Endothelial cell of umbilical vein (primary cell): ENCODE measurements at regions of chr9 and their contacts with region 1.

Region 1: DNA sequence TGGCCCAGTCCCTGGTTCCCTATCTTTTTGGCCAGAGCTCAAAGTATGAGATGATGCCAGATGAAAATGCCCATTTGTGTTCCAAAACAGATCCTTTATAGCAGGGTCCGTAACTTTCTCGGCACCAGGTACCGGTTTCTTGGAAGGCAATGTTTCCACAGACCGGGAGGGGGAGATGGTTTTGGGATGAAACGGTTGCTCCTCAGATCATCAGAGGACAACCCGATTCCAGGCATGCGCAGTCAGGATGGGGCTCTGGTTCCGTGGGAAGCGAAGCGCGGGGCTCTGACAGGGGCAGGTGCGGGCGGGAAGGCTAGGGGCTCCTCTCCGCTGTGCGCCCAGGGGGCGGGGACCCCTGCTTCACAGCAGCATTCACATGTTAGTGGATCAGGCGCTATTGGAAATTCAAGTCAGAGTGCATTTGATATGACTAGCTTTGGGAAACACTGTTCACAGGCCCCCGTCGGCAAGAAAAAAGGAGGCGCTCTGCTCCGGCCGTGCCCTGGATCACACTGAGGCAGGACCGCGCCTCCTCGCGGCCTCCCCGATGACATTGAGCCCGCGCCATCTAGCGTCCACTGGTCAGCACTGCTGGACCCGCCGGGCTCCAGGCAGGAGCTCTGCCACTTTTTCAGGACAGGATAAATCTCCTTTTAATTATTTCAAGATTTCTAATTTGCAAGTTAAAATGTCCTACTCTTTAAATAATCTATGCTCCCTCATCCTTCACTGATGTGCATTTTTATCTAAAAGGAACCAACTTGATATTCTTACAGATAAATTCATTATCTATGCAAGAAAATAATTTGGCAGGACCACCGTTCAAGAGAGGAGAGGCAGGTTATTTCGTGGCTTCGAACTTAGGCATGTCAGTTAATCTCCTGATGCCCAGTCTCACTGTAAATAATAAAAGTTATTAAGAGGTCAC is 190.0 kb downstream of the FANCC start:
- DNase-seq: peak; percentile 78
- H3K4me3 ChIP-seq: peak overlapping the region in 2 of 3 experiments; percentile 33 to 46
- H3K27ac ChIP-seq: no peak overlapping the region
- H3K4me1 ChIP-seq: no peaks in the 10 kb centered on the region
- H3K27me3 ChIP-seq: no peaks in the 10 kb centered on the region
- CTCF ChIP-seq: peak; percentile 97 to 99
- POLR2A ChIP-seq: no peak

Region 2: GRCh38 chr9:94672811-94673487 is 454.6 kb before region 1 on chr9:
- CTCF ChIA-PET with region 1: interaction called, 707 read pairs
- POLR2A ChIA-PET with region 1: interaction called, 3 read pairs
- dilution Hi-C with region 1: loop called (anchors 25 kb)
- intact Hi-C with region 1: loop called (anchors 1 kb)
- DNase-seq: no peak
- H3K4me3 ChIP-seq: no peak overlapping the region
- H3K27ac ChIP-seq: no peak overlapping the region
- H3K4me1 ChIP-seq: peaks cover 6% of the 10 kb centered on the region
- H3K27me3 ChIP-seq: no peaks in the 10 kb centered on the region
- CTCF ChIP-seq: no peak
- POLR2A ChIP-seq: no peak

Region 3: DNA sequence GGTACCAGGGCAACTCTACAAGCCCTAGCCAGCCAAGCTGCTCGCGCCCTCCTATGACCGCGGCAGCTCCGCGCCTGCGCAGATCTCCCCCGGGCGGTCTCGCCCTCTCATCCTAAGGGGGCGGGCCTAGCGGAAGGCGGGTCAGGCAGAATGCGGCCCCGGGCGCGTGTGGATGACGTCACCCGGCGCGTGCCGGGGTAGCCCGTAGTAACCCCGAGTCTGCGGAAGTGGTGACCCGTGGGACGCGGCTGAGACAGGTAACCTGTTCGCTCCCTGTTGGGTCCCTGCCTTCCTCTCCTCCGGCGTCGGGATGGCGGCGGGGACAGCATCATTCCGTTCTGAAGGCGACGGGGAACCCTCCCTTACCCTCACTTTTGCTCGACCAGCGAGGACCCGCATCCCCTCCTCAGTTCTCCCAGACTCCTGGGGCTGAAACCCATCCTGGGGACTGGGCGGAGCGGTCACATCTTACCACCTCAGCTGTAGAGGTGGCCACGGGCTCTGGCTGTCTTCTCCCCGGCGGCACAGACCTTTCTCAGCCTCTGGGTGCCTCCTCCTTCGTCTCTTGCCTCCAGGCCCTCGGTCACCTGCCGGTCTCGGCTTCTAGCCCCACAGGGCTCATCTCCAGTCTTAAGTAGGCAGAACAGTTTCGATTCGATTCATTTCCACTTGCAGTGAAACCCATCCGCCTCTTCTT is 400.9 kb before region 1 on chr9 and contains the start of gene AOPEP:
- CTCF ChIA-PET with region 1: interaction called, 12 read pairs
- POLR2A ChIA-PET with region 1: no interaction called
- dilution Hi-C with region 1: no loop called
- intact Hi-C with region 1: loop called (anchors 2 kb)
- DNase-seq: peak; percentile 94
- H3K4me3 ChIP-seq: peak within 1 kb of the TSS; percentile 62 to 93 (median 82)
- H3K27ac ChIP-seq: peak within 1 kb of the TSS; percentile 67
- H3K4me1 ChIP-seq: peaks cover 5% of the 10 kb centered on the region
- H3K27me3 ChIP-seq: no peaks in the 10 kb centered on the region
- CTCF ChIP-seq: no peak
- POLR2A ChIP-seq: peak; percentile 66
- total RNA-seq, gene AOPEP: 35.6 and 41.6 TPM in 2 replicates

Region 4: GRCh38 chr9:94783102-94783664 is 344.3 kb before region 1 on chr9:
- CTCF ChIA-PET with region 1: interaction called, 134 read pairs
- POLR2A ChIA-PET with region 1: no interaction called
- dilution Hi-C with region 1: no loop called
- intact Hi-C with region 1: loop called (anchors 1 kb)
- DNase-seq: peak; percentile 81
- H3K4me3 ChIP-seq: no peak overlapping the region
- H3K27ac ChIP-seq: no peak overlapping the region
- H3K4me1 ChIP-seq: no peaks in the 10 kb centered on the region
- H3K27me3 ChIP-seq: no peaks in the 10 kb centered on the region
- CTCF ChIP-seq: peak; percentile 64 to 65
- POLR2A ChIP-seq: no peak

Region 5: GRCh38 chr9:95095619-95096355 is 31.7 kb before region 1 on chr9:
- CTCF ChIA-PET with region 1: interaction called, 8 read pairs
- POLR2A ChIA-PET with region 1: no interaction called
- dilution Hi-C with region 1: no loop called
- intact Hi-C with region 1: loop called (anchors 1 kb)
- DNase-seq: no peak
- H3K4me3 ChIP-seq: no peak overlapping the region
- H3K27ac ChIP-seq: no peak overlapping the region
- H3K4me1 ChIP-seq: peaks cover 6% of the 10 kb centered on the region
- H3K27me3 ChIP-seq: no peaks in the 10 kb centered on the region
- CTCF ChIP-seq: no peak
- POLR2A ChIP-seq: no peak

Region 6: GRCh38 chr9:95157481-95158151 is 30.1 kb after region 1 on chr9:
- CTCF ChIA-PET with region 1: interaction called, 13 read pairs
- POLR2A ChIA-PET with region 1: no interaction called
- dilution Hi-C with region 1: no loop called
- intact Hi-C with region 1: no loop called
- DNase-seq: peak; percentile 10
- H3K4me3 ChIP-seq: no peak overlapping the region
- H3K27ac ChIP-seq: no peak overlapping the region
- H3K4me1 ChIP-seq: no peaks in the 10 kb centered on the region
- H3K27me3 ChIP-seq: no peaks in the 10 kb centered on the region
- CTCF ChIP-seq: no peak
- POLR2A ChIP-seq: no peak

Region 7: DNA sequence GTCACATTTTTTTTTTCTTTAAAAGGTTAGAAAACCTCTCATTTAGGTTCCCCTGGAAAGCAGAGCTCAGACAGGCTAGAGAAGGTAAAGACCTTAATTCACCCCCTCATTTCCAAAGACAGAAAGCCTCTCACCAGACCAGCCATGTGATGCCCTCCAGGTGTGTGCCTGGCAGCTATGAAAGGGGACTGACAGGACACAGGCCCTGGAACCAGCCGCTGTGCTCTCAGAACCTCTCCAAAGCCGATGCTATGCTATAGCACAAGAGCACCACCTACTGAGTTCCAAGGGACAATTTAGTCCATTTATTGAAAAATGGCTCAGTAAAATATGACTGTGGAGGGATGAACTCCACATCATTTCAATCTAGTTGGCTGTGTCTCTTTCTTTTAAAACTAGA is 141.2 kb after region 1 on chr9:
- CTCF ChIA-PET with region 1: interaction called, 15 read pairs
- POLR2A ChIA-PET with region 1: no interaction called
- dilution Hi-C with region 1: no loop called
- intact Hi-C with region 1: loop called (anchors 5 kb)
- DNase-seq: peak; percentile 47
- H3K4me3 ChIP-seq: no peak overlapping the region
- H3K27ac ChIP-seq: no peak overlapping the region
- H3K4me1 ChIP-seq: no peaks in the 10 kb centered on the region
- H3K27me3 ChIP-seq: no peaks in the 10 kb centered on the region
- CTCF ChIP-seq: peak; percentile 12 to 37
- POLR2A ChIP-seq: no peak